Right cardiac atrium (tissue), 5 donors: ENCODE measurements at regions of chr11 and their contacts with region 1.

Region 1: GRCh38 chr11:3169255-3170045 is 4.3 kb upstream of the OSBPL5 start:
- DNase-seq: peak; percentile 65 to 87 (median 85)
- ATAC-seq: peak; percentile 64 to 71
- H3K4me3 ChIP-seq: peak overlapping the region; percentile 4
- H3K27ac ChIP-seq: no peak overlapping the region
- H3K4me1 ChIP-seq: peaks cover 3% of the 10 kb centered on the region
- H3K27me3 ChIP-seq: no peaks in the 10 kb centered on the region

Region 2: GRCh38 chr11:2963112-2963817 is 206.2 kb before region 1 on chr11:
- intact Hi-C with region 1: no loop called
- DNase-seq: no peak
- ATAC-seq: no peak
- H3K4me3 ChIP-seq: no peak overlapping the region
- H3K27ac ChIP-seq: no peak overlapping the region
- H3K4me1 ChIP-seq: no peaks in the 10 kb centered on the region
- H3K27me3 ChIP-seq: no peaks in the 10 kb centered on the region

Region 3: DNA sequence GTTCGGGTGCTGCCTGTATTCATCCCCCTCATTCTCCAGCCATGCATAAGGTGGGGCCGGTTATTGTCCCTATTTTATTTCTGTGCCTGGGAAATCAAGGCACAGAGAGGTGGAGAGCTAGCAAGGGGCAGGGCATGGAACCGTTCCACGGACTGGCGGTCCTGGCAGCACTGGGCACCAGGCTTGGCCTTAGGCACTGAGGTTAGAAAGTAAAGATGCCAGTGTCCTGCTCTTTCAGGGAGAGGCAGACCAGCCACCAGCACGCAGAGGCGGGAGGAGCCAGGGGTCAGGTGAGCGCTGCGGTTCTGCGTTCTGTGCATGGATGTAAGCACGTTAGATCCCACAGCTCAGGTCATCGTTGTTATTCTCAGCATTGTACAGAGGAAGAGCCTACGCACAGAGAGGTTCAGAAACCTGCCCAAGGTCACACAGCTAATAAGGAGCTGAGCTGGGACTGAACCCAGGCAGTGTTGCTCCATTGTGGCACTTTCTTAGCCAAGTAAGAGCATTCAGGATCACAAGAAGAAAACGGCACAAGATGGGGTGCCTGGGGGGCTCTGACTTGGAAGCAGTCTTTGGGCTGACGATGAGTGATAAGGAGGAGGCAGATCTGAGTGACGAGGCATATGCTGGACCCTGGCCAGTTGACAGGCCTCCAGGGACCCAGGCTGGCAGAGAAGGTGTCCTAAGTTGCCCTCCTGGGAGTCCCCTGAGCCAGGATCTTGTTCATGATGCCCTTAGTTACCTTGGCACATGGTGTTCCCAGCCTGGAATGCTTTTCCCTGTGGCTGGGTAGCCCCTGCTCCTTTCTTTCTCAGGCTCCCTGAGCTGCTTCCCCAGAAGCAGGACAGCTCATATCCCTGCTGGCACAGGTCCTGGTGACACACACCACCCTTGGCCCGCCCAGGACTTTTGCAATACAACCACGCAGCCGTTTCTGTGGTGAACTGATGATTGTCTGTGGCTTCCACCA is 45.4 kb before region 1 on chr11:
- intact Hi-C with region 1: loop called in 1 of 4 experiments (anchors 10 kb)
- DNase-seq: peak; percentile 90 to 95 (median 92)
- ATAC-seq: peak; percentile 76 to 82
- H3K4me3 ChIP-seq: no peak overlapping the region
- H3K27ac ChIP-seq: peak overlapping the region; percentile 28
- H3K4me1 ChIP-seq: peaks cover 3% of the 10 kb centered on the region
- H3K27me3 ChIP-seq: no peaks in the 10 kb centered on the region

Region 4: GRCh38 chr11:3231855-3232744 is 62.6 kb after region 1 on chr11 and contains the start of gene MRGPRE:
- intact Hi-C with region 1: loop called in 1 of 4 experiments (anchors 10 kb)
- DNase-seq: peak in 2 of 3 donors; percentile 62 to 72
- ATAC-seq: peak; percentile 54 to 62
- H3K4me3 ChIP-seq: no peak within 1 kb of the TSS
- H3K27ac ChIP-seq: no peak within 1 kb of the TSS
- H3K4me1 ChIP-seq: no peaks in the 10 kb centered on the region
- H3K27me3 ChIP-seq: no peaks in the 10 kb centered on the region
- total RNA-seq, gene MRGPRE: 0.28 to 0.43 (median 0.38) TPM in 3 of 4 donors, not detected in the other